A673 (cell line): ENCODE measurements at regions of chr10 and their contacts with region 1.

Region 1: DNA sequence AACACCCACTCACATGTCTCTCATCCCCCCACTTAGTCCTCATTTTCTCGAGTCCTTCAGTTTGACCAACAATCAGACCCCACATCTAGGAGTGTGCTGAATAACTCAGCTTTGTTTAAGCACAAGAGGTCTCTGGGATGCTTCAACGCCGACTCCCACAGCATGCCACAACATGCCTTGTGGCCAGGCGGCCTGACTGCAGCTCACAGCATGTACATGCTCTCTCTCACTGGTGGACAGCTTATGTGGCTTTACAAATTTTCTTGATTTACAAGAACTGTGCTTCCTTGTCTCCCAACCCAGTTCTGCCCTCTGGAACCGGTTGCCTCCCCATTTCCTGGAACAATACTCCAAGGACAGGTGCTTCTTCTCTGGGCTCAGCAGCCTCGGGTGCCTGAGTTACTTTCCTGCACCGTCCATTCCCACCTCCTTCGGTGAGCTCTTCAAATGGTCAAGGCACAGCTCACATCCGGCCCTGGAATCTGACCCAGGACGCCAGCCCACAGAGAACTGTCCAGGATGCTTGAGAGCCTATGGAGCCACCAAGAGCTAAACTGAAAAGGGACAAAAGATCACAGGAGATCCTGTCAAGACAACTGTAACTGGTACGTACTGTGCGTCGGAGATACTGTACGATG is 72.7 kb downstream of the CTBP2 start:
- DNase-seq: no peak
- H3K4me3 ChIP-seq: no peak overlapping the region
- H3K27ac ChIP-seq: no peak overlapping the region
- H3K4me1 ChIP-seq: peaks cover 6% of the 10 kb centered on the region
- H3K27me3 ChIP-seq: no peaks in the 10 kb centered on the region
- CTCF ChIP-seq: no peak

Region 2: GRCh38 chr10:124916585-124917427 is 170.9 kb before region 1 on chr10:
- CTCF ChIA-PET with region 1: interaction called, 13 read pairs
- POLR2A ChIA-PET with region 1: no interaction called
- intact Hi-C with region 1: no loop called
- DNase-seq: peak; percentile 97
- H3K4me3 ChIP-seq: peak overlapping the region; percentile 87
- H3K27ac ChIP-seq: peak overlapping the region; percentile 91
- H3K4me1 ChIP-seq: no peaks in the 10 kb centered on the region
- H3K27me3 ChIP-seq: no peaks in the 10 kb centered on the region
- CTCF ChIP-seq: no peak